ENCODE measurements at regions of chr14 and their contacts with region 1.

Region 1: GRCh38 chr14:95683793-95684192 is 2.4 kb upstream of the TCL1B start:
- DNase-seq: peak; percentile 77
- CTCF ChIP-seq: peak; percentile 74

Region 2: DNA sequence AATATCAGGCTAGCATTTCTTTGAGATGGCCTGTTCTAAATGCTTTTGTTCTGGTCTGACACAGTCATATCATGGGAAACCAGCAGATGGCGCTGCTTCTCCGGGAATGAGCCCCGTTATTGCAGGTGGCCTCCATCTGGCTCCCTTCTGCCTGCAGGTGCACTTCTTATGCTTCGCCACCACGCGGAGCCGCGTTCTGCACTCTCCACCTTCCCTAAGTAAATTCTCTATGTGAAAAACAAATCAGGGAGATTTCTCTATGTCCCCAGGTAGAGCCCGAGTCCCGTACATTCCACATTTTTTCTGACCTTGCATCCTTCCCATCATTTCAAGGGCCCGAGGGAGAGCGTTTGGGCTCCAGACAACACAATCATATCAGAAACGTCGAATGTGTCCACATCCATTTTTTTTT is 122.8 kb before region 1 on chr14:
- CTCF ChIA-PET with region 1: interaction called, 35 read pairs
- POLR2A ChIA-PET with region 1: no interaction called
- DNase-seq: peak; percentile 89
- CTCF ChIP-seq: peak; percentile 90

Region 3: DNA sequence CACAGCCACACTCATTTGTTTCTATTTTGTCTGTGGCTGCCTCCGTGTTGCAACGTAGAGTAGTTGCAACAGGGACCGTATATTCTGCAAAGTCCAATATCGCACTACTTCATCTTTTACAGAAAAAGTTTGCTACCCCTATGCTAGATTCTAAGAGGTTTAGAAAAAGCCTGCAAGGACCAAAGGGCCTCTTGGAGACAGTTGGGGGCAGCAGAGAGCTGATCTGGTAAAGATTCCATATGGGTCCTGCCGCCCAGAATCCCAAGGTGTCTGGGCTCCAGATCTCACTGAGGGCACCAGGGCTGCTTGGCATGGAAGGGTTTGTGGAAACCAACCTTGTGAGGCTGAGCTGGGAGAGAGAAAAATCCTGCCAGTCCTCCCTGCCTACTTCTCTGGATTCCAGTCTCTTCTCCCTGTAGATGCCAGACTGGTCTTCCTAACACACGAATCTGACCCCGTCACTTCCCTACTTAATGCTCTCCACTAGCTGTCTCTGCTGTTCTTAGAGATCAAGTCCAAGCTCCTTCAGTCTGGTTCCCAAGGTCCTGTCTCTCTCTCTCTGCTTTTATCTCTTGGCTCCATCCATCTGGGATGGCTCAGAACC is 74.3 kb before region 1 on chr14:
- CTCF ChIA-PET with region 1: interaction called, 51 read pairs
- POLR2A ChIA-PET with region 1: no interaction called
- DNase-seq: peak; percentile 46
- CTCF ChIP-seq: peak; percentile 71

Region 4: GRCh38 chr14:95668235-95668772 is 15.5 kb before region 1 on chr14:
- CTCF ChIA-PET with region 1: interaction called, 49 read pairs
- POLR2A ChIA-PET with region 1: no interaction called
- DNase-seq: no peak
- CTCF ChIP-seq: no peak

Region 5: GRCh38 chr14:95697764-95698163 is 14.0 kb after region 1 on chr14:
- CTCF ChIA-PET with region 1: interaction called, 23 read pairs
- POLR2A ChIA-PET with region 1: no interaction called
- DNase-seq: peak; percentile 49
- CTCF ChIP-seq: no peak

Measured in GM10248 (cell line).